ENCODE measurements at regions of chr19 and their contacts with region 1.

Region 1: DNA sequence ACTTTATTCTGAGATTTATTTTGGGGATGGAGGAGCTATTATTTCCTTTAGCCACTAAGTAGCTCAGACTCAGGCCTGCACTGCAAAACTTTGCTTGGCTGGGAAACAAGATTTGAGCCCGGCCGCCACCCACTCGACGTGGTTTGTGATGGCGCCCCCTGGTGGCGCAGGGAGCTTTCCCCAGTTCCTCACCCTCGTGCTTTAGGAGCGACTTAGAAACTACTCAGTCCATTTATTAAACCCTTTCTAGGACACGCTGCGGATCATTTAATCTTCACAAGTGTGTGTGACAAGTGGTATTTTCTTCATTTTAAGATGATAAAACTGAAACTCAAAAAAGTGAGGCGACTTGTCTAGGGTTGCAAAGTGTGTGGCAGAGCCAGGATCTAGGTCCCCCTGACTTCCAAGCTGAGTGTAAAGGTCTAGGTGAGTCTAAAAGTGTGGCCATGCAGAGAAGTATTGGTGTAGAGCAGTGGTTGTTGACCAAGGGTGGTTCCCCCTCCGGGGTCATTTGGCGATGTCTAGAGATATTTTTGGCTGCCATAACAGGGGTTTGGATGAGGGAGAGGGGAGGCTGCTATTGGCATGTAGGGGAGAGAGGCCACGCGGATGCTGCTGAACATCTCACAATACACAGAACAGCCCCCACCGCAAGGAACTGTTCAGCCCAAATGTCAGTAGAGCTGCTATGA is 2.2 kb downstream of the CXCL17 start:
- H3K4me3 ChIP-seq: no peak overlapping the region
- H3K27ac ChIP-seq: no peak overlapping the region
- H3K4me1 ChIP-seq: peaks cover 10% of the 10 kb centered on the region
- CTCF ChIP-seq: peak; percentile 80

Region 2: DNA sequence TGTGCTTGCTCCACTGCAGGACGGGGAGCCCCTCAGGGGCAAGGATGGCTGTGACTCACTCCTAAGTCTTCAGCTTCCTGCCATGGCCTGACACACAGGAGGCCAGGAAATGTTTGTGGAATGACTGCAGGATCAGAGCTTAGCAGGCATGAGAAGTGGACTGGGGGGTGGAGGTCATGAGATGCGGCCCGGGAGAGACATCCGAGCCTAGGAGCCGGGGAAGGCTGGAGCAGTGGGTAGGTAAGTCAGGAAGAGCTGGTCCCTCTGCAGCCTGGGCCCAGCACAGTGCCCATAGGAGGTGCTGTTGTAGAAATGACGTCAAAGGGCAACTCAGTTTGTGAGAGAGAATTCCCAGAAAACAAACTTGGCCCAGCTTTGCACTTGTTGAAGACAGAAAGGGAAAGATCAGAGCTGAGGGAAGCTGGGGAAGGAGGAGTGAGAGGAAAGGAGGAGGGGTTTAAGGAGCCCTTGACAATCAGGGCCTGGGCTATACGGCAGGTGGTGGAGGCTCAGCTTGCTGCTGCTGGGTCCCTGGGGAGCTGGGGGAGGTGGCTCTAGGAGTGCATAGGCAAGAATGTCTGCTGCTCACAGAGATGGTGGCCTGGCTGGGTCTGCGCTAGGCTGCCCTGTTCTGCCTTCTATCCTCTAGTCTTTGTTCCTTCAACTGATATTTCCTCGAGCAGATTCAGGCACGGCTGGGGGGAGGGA is 326.7 kb before region 1 on chr19:
- CTCF ChIA-PET with region 1: interaction called, 51 read pairs
- POLR2A ChIA-PET with region 1: no interaction called
- H3K4me3 ChIP-seq: no peak overlapping the region
- H3K27ac ChIP-seq: 0 out of 2 replicates have a peak overlapping the region, but pooled peaks have one; percentile 5
- H3K4me1 ChIP-seq: peaks cover 9% of the 10 kb centered on the region; the same call in 1 of the 2 replicates
- CTCF ChIP-seq: peak; percentile 40; the same call in 1 of the 2 replicates

Region 3: DNA sequence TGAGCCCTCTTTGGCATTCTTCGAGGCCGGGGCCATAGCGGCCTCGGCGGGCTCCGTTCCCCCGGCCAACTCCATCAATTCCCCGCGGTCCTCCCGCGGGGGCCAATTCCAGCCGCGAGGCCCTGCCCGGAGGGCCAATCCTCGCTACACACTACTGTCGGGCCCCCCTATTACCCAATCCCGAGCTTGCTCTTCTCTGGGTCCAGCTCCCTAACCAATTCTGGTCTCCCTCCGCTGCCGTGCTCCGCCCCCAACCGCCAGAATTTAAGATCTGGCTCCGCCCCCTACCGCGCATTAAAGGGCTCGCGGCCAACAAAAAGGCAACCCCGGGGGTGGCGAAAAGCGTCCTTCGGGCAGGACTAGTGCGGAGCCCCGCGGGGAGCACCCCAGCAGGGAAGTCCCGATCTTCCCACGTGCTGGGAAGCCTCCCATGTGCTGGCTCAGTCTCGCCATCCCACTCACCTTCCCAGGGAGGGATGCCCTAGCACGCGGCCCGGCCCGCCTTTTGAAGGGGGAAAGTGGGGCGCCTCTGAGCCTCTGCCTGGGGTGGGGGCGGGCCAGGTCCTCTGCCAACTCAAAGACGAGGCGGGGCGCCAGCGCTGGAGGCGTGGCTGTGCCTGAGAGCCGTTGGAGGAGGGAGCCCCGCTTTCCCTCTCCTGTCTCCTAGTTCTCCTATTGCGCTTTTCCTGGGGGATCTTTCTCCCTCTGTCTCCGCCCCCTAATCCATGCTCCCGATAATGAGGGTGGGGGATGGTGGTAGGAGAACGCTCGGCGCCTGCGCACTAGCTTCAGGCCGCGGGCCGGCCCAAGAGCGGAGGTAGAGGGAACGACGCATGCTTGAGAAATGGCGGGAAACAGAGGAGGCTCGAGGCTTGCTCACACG is 16.8 kb before region 1 on chr19:
- CTCF ChIA-PET with region 1: interaction called, 98 read pairs
- POLR2A ChIA-PET with region 1: interaction called, 9 read pairs
- H3K4me3 ChIP-seq: peak overlapping the region; percentile 44
- H3K27ac ChIP-seq: peak overlapping the region; percentile 57; the same call in 1 of the 2 replicates
- H3K4me1 ChIP-seq: peaks cover 3% of the 10 kb centered on the region; the same call in 1 of the 2 replicates
- CTCF ChIP-seq: no peak

Region 4: DNA sequence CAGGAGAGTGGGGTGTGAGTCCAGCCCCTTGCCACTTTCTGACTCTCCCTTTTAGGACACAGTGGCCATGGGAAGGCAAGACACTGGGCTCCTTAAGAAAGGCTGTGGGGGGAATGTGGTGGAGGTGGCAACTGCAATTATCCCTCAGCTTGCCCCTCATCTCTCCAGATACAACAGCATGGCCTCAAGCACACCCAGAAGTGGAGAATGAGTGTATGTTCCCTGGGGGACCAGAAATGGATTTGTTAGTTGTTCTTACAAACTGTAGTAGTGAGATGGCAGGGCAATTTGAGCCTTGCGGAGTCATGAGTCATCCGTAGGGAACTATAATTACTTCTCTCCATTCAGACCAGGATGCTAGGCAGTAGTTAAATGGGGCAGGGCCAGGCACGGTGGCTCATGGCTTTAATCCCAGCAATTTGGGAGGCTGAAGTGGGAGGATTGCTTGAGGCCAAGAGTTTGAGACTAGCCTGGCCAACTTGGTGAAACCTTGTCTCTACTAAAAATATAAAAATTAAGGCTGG is 27.8 kb after region 1 on chr19:
- CTCF ChIA-PET with region 1: interaction called, 24 read pairs
- POLR2A ChIA-PET with region 1: no interaction called
- H3K4me3 ChIP-seq: no peak overlapping the region
- H3K27ac ChIP-seq: peak overlapping the region; percentile 60; the same call in 1 of the 2 replicates
- H3K4me1 ChIP-seq: peaks cover 34% of the 10 kb centered on the region
- CTCF ChIP-seq: no peak

Region 5: DNA sequence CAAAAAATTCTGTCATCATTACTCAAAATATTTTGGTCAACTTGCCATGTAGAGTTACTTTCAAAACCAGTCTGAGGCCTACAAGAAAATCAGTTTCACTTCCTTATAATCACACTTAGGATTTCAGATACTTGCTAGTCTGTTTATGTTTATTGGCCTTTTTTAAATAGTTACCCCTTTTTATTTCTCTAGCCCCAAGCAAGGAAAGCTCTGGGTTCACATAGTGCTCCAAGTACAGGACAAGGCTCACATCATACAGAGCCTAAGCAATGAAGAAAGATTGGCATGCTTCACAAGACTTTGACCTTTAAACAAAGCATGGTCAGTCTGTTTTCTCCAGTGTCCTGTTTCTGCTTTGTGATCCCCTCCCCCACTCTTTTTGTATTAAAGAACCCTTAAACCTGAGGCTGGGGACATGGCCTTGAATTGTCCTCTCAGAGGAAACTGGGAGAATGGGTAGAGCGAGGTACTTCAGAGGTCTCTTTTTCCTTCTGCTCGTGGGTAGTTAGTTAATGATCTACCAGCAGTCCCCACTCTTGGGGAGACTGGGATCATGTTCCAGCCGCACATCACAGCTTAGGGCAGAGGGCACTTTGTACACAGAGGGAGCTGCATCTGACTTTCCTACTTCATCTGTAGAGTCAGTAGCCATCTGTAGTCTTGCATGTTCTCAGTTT is 57.1 kb after region 1 on chr19:
- CTCF ChIA-PET with region 1: interaction called, 10 read pairs
- POLR2A ChIA-PET with region 1: no interaction called
- H3K4me3 ChIP-seq: no peak overlapping the region
- H3K27ac ChIP-seq: no peak overlapping the region
- H3K4me1 ChIP-seq: peaks cover 6% of the 10 kb centered on the region; the same call in 1 of the 2 replicates
- CTCF ChIP-seq: no peak

Region 6: GRCh38 chr19:42534391-42534790 is 93.9 kb after region 1 on chr19:
- CTCF ChIA-PET with region 1: interaction called, 67 read pairs
- POLR2A ChIA-PET with region 1: no interaction called
- H3K4me3 ChIP-seq: no peak overlapping the region
- H3K27ac ChIP-seq: no peak overlapping the region
- H3K4me1 ChIP-seq: no peaks in the 10 kb centered on the region
- CTCF ChIP-seq: no peak